CD4-positive, alpha-beta T cell (primary cell): ENCODE measurements at regions of chr6 and their contacts with region 1.

Region 1: GRCh38 chr6:27146706-27147505 is 100.6 kb upstream of the PRSS16 start:
- DNase-seq: peak; percentile 61 to 99 (median 72)
- ATAC-seq: peak; percentile 86
- H3K4me3 ChIP-seq: peak overlapping the region; percentile 69
- H3K4me3 Mint-ChIP-seq: no peak overlapping the region
- H3K27ac ChIP-seq: peak overlapping the region; percentile 84 to 97
- H3K27ac Mint-ChIP-seq: no peak overlapping the region
- H3K4me1 ChIP-seq: peaks cover 17% of the 10 kb centered on the region
- H3K4me1 Mint-ChIP-seq: peaks cover 11% of the 10 kb centered on the region
- H3K27me3 ChIP-seq: no peaks in the 10 kb centered on the region
- H3K27me3 Mint-ChIP-seq: no peaks in the 10 kb centered on the region
- CTCF ChIP-seq: no peak

Region 2: DNA sequence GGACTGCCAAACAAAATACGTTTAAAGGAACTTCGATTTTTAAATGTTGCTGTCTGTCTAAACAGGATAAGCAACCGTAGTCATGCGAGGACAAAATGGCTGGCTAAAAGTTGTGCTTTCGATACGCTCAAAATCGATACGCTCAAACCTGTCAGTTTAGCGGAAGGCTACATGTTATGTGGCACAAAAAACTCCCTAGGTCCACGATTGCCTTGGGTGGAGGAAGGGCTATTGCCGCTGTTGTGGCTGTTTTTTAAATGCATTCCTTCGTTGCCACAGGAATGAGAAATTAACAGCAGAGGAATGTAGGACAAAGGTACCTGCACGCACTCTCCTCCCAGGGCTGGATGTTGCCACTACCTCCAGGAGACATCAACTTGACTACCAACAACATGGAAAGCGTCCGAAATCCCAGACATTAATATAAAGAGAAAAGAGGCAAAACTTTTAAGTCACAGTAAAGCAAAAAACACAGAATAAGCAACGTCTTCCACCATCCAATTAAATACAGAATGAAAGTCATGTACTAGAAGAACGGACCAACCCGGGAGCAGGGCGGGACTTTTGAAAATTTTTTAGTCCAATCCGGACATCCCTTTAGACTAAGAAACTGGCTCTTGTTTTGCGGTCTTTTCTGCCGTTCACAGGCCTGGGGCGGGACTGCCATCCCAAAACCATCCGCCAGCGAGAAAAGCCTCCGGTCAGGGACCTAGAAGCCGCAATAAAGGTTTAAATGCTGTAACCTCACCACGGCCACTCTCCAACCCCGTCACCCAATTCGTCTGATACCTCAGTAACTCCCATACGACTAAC is 1091.8 kb before region 1 on chr6:
- CTCF ChIA-PET with region 1: no interaction called
- POLR2A ChIA-PET with region 1: interaction called, 25 read pairs
- intact Hi-C with region 1: no loop called
- DNase-seq: peak; percentile 68 to 97 (median 80)
- ATAC-seq: peak; percentile 71
- H3K4me3 ChIP-seq: peak overlapping the region; percentile 89
- H3K4me3 Mint-ChIP-seq: peak overlapping the region; percentile 97
- H3K27ac ChIP-seq: peak overlapping the region; percentile 81
- H3K27ac Mint-ChIP-seq: peak overlapping the region; percentile 96
- H3K4me1 ChIP-seq: peaks cover 29% of the 10 kb centered on the region
- H3K4me1 Mint-ChIP-seq: peaks cover 28% of the 10 kb centered on the region
- H3K27me3 ChIP-seq: no peaks in the 10 kb centered on the region
- H3K27me3 Mint-ChIP-seq: no peaks in the 10 kb centered on the region
- CTCF ChIP-seq: no peak

Region 3: GRCh38 chr6:26285143-26286134 is 861.5 kb before region 1 on chr6:
- CTCF ChIA-PET with region 1: no interaction called
- POLR2A ChIA-PET with region 1: interaction called, 7 read pairs
- intact Hi-C with region 1: loop called in 1 of 2 experiments (anchors 5 kb)
- DNase-seq: peak; percentile 85 to 99 (median 92)
- ATAC-seq: peak; percentile 82
- H3K4me3 ChIP-seq: peak overlapping the region; percentile 62
- H3K4me3 Mint-ChIP-seq: peak overlapping the region; percentile 87
- H3K27ac ChIP-seq: peak overlapping the region; percentile 82 to 85
- H3K27ac Mint-ChIP-seq: peak overlapping the region; percentile 96
- H3K4me1 ChIP-seq: peaks cover 16% of the 10 kb centered on the region
- H3K4me1 Mint-ChIP-seq: peaks cover 24% of the 10 kb centered on the region
- H3K27me3 ChIP-seq: no peaks in the 10 kb centered on the region
- H3K27me3 Mint-ChIP-seq: peaks cover 11% of the 10 kb centered on the region
- CTCF ChIP-seq: no peak

Region 4: DNA sequence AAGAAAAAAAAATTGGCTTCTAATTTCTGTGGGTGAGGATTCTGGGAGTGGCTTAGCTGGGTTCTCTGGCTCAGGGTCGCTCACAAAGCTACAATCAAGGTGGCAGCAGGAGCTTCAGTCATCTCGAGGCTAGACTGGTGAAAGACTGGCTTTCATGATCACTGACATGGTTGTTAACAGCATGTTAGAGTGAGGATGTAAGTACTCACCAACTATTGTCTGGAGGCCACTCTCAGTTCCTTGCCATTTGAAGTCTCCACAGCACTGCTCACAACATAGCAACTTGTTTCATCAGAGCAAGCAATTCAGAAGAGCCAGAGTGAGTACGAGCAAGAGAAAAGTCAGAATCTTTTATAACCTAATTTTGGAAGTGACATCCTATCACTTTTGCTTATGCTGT is 45.1 kb before region 1 on chr6:
- CTCF ChIA-PET with region 1: no interaction called
- POLR2A ChIA-PET with region 1: no interaction called
- intact Hi-C with region 1: no loop called
- DNase-seq: no peak
- ATAC-seq: no peak
- H3K4me3 ChIP-seq: no peak overlapping the region
- H3K4me3 Mint-ChIP-seq: no peak overlapping the region
- H3K27ac ChIP-seq: no peak overlapping the region
- H3K27ac Mint-ChIP-seq: no peak overlapping the region
- H3K4me1 ChIP-seq: peaks cover 6% of the 10 kb centered on the region
- H3K4me1 Mint-ChIP-seq: peaks cover 5% of the 10 kb centered on the region
- H3K27me3 ChIP-seq: peaks cover 14 to 23% of the 10 kb centered on the region in 2 experiments
- H3K27me3 Mint-ChIP-seq: peaks cover 51% of the 10 kb centered on the region
- CTCF ChIP-seq: no peak

Region 5: GRCh38 chr6:27479319-27480182 is 332.6 kb after region 1 on chr6:
- CTCF ChIA-PET with region 1: interaction called, 3 read pairs
- POLR2A ChIA-PET with region 1: interaction called, 18 read pairs
- intact Hi-C with region 1: no loop called
- DNase-seq: peak; percentile 82 to 94 (median 90)
- ATAC-seq: peak; percentile 71
- H3K4me3 ChIP-seq: peak overlapping the region; percentile 62
- H3K4me3 Mint-ChIP-seq: no peak overlapping the region
- H3K27ac ChIP-seq: peak overlapping the region; percentile 93 to 94
- H3K27ac Mint-ChIP-seq: no peak overlapping the region
- H3K4me1 ChIP-seq: peaks cover 16% of the 10 kb centered on the region
- H3K4me1 Mint-ChIP-seq: peaks cover 3% of the 10 kb centered on the region
- H3K27me3 ChIP-seq: no peaks in the 10 kb centered on the region
- H3K27me3 Mint-ChIP-seq: no peaks in the 10 kb centered on the region
- CTCF ChIP-seq: no peak

Region 6: DNA sequence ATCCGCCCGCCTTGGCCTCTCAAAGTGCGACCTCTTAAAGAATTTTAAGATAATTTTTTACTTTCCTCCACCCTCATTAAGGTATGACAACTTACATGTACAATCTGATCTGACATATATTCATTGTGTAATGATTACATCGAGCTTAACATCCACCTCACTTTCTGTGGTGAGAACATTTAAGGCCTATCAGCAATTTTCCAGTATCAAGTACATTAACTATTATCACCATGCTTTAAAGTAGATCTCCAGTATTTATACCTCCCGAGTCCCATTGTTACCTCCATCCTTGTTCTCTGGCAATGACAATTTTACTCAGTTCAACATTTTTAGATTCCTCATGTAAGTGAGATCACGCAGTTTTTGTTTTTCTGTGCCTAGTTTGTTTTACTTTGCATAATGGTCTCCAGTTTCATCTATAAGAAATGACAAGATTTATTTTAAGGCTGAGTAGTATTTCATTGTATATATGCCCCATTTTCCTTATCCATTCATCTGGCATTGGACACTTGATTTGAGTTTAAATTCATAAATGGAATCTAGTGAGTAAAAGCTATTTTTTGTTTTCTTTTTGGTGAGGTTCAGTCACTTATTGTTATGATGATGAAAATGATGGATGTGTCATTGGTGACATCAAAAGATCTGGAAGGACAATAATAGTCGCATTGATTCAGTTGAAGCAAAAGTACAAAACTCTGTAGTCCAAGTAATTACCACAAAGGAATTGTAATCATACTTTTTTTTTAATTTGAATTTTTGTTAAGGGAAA is 678.3 kb after region 1 on chr6:
- CTCF ChIA-PET with region 1: no interaction called
- POLR2A ChIA-PET with region 1: interaction called, 17 read pairs
- intact Hi-C with region 1: no loop called
- DNase-seq: peak in 2 of 14 experiments; percentile 27 to 38
- ATAC-seq: no peak
- H3K4me3 ChIP-seq: peak overlapping the region; percentile 82
- H3K4me3 Mint-ChIP-seq: peak overlapping the region; percentile 90
- H3K27ac ChIP-seq: peak overlapping the region; percentile 77 to 87
- H3K27ac Mint-ChIP-seq: peak overlapping the region; percentile 99
- H3K4me1 ChIP-seq: peaks cover 8% of the 10 kb centered on the region
- H3K4me1 Mint-ChIP-seq: peaks cover 38% of the 10 kb centered on the region
- H3K27me3 ChIP-seq: no peaks in the 10 kb centered on the region
- H3K27me3 Mint-ChIP-seq: no peaks in the 10 kb centered on the region
- CTCF ChIP-seq: no peak

Region 7: GRCh38 chr6:28880894-28881780 is 1734.2 kb after region 1 on chr6:
- CTCF ChIA-PET with region 1: no interaction called
- POLR2A ChIA-PET with region 1: interaction called, 10 read pairs
- intact Hi-C with region 1: no loop called
- DNase-seq: peak in 13 of 14 experiments; percentile 27 to 71 (median 43)
- ATAC-seq: no peak
- H3K4me3 ChIP-seq: peak overlapping the region; percentile 39
- H3K4me3 Mint-ChIP-seq: peak overlapping the region; percentile 77
- H3K27ac ChIP-seq: no peak overlapping the region
- H3K27ac Mint-ChIP-seq: peak overlapping the region; percentile 81
- H3K4me1 ChIP-seq: peaks cover 24% of the 10 kb centered on the region
- H3K4me1 Mint-ChIP-seq: peaks cover 39% of the 10 kb centered on the region
- H3K27me3 ChIP-seq: no peaks in the 10 kb centered on the region
- H3K27me3 Mint-ChIP-seq: peaks cover 7% of the 10 kb centered on the region
- CTCF ChIP-seq: no peak